Left ventricle myocardium superior (tissue), 1 donor: ENCODE measurements at regions of chr3 and their contacts with region 1.

Region 1: DNA sequence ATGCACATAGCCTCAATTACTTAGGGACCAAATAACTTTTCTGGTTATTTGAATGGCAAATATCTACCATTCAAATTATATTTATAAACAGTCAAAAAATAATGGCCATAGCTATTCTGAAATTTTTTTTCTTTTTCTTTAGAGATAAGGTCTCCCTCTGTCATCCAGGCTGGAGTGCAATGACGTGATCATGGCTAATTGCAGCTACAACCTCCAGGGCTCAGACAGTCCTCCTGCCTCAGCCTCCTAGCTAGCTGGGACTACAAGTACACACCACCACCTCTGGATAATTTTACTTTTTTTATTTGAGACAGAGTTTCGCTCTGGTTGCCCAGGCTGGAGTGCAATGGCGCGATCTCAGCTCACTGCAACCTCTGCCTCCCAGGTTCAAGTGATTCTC is 16.6 kb downstream of the PPP1R2 start:
- DNase-seq: no peak
- ATAC-seq: no peak

Region 2: DNA sequence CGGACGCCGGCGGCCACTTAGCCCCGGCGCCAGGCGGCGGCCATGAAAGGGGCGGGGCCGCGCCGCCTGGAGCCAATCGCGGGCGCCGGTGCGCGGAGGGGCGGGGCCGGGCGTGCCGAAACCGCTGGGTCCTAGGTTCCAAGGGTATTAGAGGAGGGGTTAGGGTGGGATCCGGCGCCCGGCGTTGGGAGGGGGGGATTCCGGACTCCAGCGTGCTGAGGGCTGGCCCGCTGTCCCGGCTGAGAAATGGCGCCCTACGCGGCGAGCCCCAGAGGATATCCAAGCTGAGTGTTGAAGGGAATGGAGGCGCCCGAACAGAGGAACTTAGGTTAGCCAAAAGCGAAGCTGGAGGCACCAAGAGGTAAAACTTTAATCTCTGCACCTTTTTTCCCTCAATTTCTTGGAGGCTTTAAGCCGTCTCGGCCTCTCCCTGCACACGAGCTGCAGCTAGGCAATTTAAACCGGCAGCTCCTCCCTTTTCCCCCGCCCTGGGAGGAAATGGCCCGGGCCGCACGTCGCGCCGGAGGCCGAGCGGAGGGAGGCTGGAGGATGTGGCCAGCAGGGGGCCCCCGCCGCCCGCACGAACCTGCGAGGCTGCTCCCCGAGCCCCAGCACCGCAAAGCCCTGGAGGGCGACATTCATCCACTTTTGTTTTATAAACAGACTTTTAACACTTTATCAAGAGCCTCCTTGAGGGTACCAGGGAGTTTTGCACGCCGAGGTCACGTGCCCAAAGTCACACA is 255.2 kb before region 1 on chr3 and contains the start of gene XXYLT1:
- intact Hi-C with region 1: loop called (anchors 5 kb)
- DNase-seq: peak; percentile 95
- ATAC-seq: peak; percentile 97
- total RNA-seq, gene XXYLT1: 2.1 TPM